Activated B cell treated with CpG ODN at 0.5 μM for 24 hours (primary cell): ENCODE measurements at regions of chr5 and their contacts with region 1.

Region 1: GRCh38 chr5:157431544-157432200 is 28.3 kb upstream of the NIPAL4 start:
- DNase-seq: no peak
- ATAC-seq: peak; percentile 100
- H3K4me3 Mint-ChIP-seq: peak overlapping the region; percentile 0
- H3K27ac Mint-ChIP-seq: peak overlapping the region; percentile 81
- H3K4me1 Mint-ChIP-seq: peaks cover 18% of the 10 kb centered on the region
- H3K27me3 Mint-ChIP-seq: no peaks in the 10 kb centered on the region
- CTCF ChIP-seq: no peak

Region 2: GRCh38 chr5:157398305-157398704 is 33.4 kb before region 1 on chr5:
- CTCF ChIA-PET with region 1: no interaction called
- POLR2A ChIA-PET with region 1: no interaction called
- intact Hi-C with region 1: no loop called
- DNase-seq: no peak
- ATAC-seq: peak; percentile 67
- H3K4me3 Mint-ChIP-seq: no peak overlapping the region
- H3K27ac Mint-ChIP-seq: peak overlapping the region; percentile 42
- H3K4me1 Mint-ChIP-seq: peaks cover 13% of the 10 kb centered on the region
- H3K27me3 Mint-ChIP-seq: no peaks in the 10 kb centered on the region
- CTCF ChIP-seq: no peak

Region 3: DNA sequence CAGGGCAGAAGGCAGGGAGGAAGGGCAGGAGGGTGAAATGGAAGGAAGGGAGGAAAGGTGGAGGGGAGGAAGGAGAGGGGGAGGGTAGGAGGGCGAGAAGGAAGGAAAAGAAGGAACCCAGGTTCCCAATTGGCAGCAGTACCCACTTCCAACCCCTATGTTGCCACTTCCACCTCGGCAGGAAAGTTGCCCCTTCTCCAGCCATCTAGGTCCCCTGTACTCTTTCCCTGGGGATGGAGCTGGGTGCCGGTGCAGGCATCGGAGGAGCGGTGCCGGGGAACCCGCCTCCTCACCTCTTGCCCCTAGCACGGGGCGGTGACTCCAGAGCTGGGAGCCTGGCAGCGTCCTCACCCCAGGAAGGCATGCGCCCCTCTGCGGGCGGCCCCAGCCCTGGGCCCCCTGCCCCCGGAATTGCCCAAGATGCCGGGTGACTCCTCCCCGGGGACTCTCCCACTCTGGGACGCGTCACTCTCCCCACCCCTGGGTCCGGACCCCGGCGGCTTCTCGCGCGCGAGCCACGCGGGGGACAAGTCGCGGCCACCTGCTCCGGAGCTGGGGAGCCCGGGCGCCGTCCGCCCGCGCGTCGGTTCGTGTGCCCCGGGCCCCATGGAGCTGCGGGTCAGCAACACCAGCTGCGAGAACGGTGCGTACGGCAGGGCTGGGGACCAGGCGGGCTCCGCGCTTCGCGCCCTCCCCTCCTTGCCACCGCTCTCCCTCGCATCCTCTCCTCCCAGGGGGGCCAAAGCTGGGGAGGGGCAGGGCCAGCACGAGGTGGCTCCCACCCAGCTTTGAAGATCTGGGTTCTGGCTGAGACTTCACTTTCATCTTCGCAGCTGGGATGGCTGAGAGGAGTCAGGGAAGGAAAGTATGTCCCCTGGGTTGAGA is 28.3 kb after region 1 on chr5 and contains the start of gene NIPAL4:
- CTCF ChIA-PET with region 1: interaction called, 23 read pairs
- POLR2A ChIA-PET with region 1: interaction called, 3 read pairs
- intact Hi-C with region 1: no loop called
- DNase-seq: peak; percentile 48
- ATAC-seq: peak; percentile 54
- H3K4me3 Mint-ChIP-seq: peak within 1 kb of the TSS; percentile 84
- H3K27ac Mint-ChIP-seq: peak within 1 kb of the TSS; percentile 72
- H3K4me1 Mint-ChIP-seq: peaks cover 75% of the 10 kb centered on the region
- H3K27me3 Mint-ChIP-seq: no peaks in the 10 kb centered on the region
- CTCF ChIP-seq: no peak
- total RNA-seq, gene NIPAL4: 2.7 and 2.8 TPM in 2 replicates

Region 4: GRCh38 chr5:157476702-157477408 is 45.2 kb after region 1 on chr5:
- CTCF ChIA-PET with region 1: interaction called, 37 read pairs
- POLR2A ChIA-PET with region 1: interaction called, 3 read pairs
- intact Hi-C with region 1: loop called (anchors 1 kb)
- DNase-seq: no peak
- ATAC-seq: no peak
- H3K4me3 Mint-ChIP-seq: no peak overlapping the region
- H3K27ac Mint-ChIP-seq: peak overlapping the region; percentile 68
- H3K4me1 Mint-ChIP-seq: peaks cover 76% of the 10 kb centered on the region
- H3K27me3 Mint-ChIP-seq: no peaks in the 10 kb centered on the region
- CTCF ChIP-seq: no peak

Region 5: GRCh38 chr5:157540707-157541446 is 109.2 kb after region 1 on chr5:
- CTCF ChIA-PET with region 1: no interaction called
- POLR2A ChIA-PET with region 1: no interaction called
- intact Hi-C with region 1: loop called (anchors 5 kb)
- DNase-seq: peak; percentile 37
- ATAC-seq: peak; percentile 91
- H3K4me3 Mint-ChIP-seq: peak overlapping the region; percentile 60
- H3K27ac Mint-ChIP-seq: peak overlapping the region; percentile 92
- H3K4me1 Mint-ChIP-seq: peaks cover 86% of the 10 kb centered on the region
- H3K27me3 Mint-ChIP-seq: no peaks in the 10 kb centered on the region
- CTCF ChIP-seq: no peak

Region 6: GRCh38 chr5:157651623-157652549 is 220.2 kb after region 1 on chr5 and contains the start of gene SOX30:
- CTCF ChIA-PET with region 1: no interaction called
- POLR2A ChIA-PET with region 1: interaction called, 4 read pairs
- intact Hi-C with region 1: loop called (anchors 5 kb)
- DNase-seq: peak; percentile 77
- ATAC-seq: peak; percentile 97
- H3K4me3 Mint-ChIP-seq: peak within 1 kb of the TSS; percentile 84
- H3K27ac Mint-ChIP-seq: peak within 1 kb of the TSS; percentile 86
- H3K4me1 Mint-ChIP-seq: peaks cover 50% of the 10 kb centered on the region
- H3K27me3 Mint-ChIP-seq: no peaks in the 10 kb centered on the region
- CTCF ChIP-seq: no peak
- total RNA-seq, gene SOX30: 0.37 and 0.47 TPM in 2 replicates